Gastrocnemius medialis (tissue), 4 donors: ENCODE measurements at regions of chr9 and their contacts with region 1.

Region 1: DNA sequence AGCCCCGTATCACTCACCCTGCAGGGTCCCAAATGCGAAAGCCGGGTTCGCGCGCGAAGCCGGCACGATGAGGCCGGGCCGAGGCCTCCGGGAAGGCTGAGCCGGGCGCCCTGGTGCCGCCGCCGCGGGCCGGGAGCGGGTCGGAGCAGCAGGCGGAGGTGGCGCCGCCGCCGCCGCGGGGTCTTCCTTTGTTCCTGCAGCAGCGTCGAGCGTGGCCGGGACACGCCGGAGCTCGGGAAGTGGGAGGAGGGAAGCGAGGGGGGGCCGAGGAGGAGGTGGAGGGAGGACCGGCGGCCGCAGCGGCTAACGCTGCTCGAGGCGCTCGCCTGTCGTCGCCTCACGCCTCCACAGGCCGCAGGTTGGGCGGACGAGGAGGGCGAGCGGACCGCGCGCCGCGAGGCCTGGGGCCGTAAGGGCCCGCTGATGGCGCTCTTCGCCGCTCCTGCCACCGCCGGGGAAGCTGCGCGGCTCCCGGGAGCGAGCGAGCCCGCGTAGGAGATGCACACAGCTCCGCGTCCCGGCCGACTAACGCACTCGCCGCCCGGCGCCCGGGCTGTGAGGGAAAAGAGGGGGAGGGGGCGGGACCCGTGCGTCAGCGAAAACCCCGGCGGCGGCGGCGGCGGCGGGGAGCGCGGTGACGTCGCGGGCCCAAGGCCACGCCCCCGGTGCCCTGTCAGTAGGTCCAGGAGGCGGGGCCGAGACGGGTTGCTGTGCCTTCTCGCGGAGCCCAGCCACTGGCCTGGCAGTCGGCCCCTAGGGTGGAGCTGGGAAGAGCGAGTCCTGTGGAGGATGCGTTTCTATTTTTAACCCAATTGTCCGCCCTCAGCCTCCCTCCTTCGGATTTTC is at the start of gene ZFAND5:
- DNase-seq: peak; percentile 98 to 99
- ATAC-seq: peak; percentile 53 to 72
- H3K4me3 ChIP-seq: peak within 1 kb of the TSS; percentile 76 to 93 (median 85)
- H3K27ac ChIP-seq: peak within 1 kb of the TSS; percentile 94 to 99 (median 98)
- H3K4me1 ChIP-seq: peaks cover 16 to 17% of the 10 kb centered on the region in 2 donors
- H3K27me3 ChIP-seq: no peaks in the 10 kb centered on the region
- CTCF ChIP-seq: peak in 2 of 5 experiments; percentile 19 to 31
- POLR2A ChIP-seq: peak; percentile 100
- total RNA-seq, gene ZFAND5: 316 to 2,069 (median 561) TPM

Region 2: GRCh38 chr9:70413798-70414775 is 1950.8 kb before region 1 on chr9 and contains the start of gene KLF9:
- in situ Hi-C with region 1: no loop called
- intact Hi-C with region 1: loop called (anchors 2 kb)
- DNase-seq: peak; percentile 98 to 99
- ATAC-seq: peak; percentile 57 to 61
- H3K4me3 ChIP-seq: peak within 1 kb of the TSS; percentile 76 to 99 (median 96)
- H3K27ac ChIP-seq: peak within 1 kb of the TSS; percentile 92 to 100 (median 100)
- H3K4me1 ChIP-seq: peaks cover 46 to 52% of the 10 kb centered on the region in 2 donors
- H3K27me3 ChIP-seq: no peaks in the 10 kb centered on the region
- CTCF ChIP-seq: no peak
- POLR2A ChIP-seq: no peak
- total RNA-seq, gene KLF9: 122 to 174 (median 169) TPM

Region 3: GRCh38 chr9:72305102-72305546 is 59.8 kb before region 1 on chr9:
- in situ Hi-C with region 1: loop called in 1 of 4 experiments (anchors 10 kb)
- intact Hi-C with region 1: no loop called
- DNase-seq: peak; percentile 57 to 67
- ATAC-seq: peak; percentile 57 to 87
- H3K4me3 ChIP-seq: peak overlapping the region in 3 of 4 donors; percentile 14 to 49 (median 22)
- H3K27ac ChIP-seq: peak overlapping the region; percentile 23 to 86 (median 76)
- H3K4me1 ChIP-seq: peaks cover 0 to 14% of the 10 kb centered on the region in 2 donors
- H3K27me3 ChIP-seq: no peaks in the 10 kb centered on the region
- CTCF ChIP-seq: no peak
- POLR2A ChIP-seq: peak; percentile 42 to 83

Region 4: DNA sequence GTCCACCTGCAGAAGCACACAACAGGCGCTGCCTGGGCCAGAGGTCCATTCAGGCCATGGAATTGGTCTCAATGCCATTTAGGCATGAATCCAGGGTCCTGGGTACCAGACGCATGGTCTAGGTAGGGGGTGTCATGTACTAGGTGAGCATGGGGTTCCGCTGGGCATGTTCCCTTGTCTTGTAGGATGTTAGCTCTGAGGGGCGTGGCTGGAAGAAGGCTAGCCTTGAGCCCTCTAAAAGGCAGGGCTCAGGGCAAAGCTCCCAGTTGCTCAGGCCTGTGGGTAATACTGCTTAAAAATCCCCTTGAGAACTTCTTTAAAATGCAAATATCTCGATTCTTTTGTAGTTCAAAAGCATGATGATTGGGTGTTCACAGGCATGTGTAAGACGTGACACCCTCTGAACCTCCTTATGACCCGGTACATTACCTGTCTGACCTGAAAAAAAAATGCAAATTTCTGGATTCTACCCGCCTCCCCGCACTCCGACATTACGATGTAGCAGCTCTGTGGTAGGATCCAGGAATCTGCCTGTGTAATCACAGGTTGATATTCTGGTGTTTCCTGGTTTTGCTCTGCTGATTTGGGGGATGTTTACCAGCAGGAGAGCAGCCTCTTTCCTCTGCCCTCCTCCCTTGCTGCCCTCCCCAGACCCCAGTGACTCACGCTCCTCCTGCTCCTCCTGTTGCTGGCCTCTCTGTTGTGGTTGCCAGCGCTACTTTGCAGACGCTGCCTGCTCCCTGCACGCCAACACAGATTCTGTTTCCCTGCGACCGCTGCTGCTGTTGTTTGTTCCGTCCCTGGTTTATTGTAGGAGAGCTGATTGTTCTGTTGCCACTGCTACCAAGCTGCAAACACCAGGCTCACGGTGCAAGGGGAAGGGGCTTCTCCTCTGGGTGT is 162.2 kb after region 1 on chr9:
- in situ Hi-C with region 1: no loop called
- intact Hi-C with region 1: loop called (anchors 5 kb)
- DNase-seq: peak; percentile 80 to 82
- ATAC-seq: peak; percentile 95
- H3K4me3 ChIP-seq: peak overlapping the region; percentile 13 to 48 (median 34)
- H3K27ac ChIP-seq: peak overlapping the region; percentile 63 to 80 (median 74)
- H3K4me1 ChIP-seq: peaks cover 16 to 21% of the 10 kb centered on the region in 2 donors
- H3K27me3 ChIP-seq: no peaks in the 10 kb centered on the region
- CTCF ChIP-seq: no peak
- POLR2A ChIP-seq: peak; percentile 21 to 73

Region 5: DNA sequence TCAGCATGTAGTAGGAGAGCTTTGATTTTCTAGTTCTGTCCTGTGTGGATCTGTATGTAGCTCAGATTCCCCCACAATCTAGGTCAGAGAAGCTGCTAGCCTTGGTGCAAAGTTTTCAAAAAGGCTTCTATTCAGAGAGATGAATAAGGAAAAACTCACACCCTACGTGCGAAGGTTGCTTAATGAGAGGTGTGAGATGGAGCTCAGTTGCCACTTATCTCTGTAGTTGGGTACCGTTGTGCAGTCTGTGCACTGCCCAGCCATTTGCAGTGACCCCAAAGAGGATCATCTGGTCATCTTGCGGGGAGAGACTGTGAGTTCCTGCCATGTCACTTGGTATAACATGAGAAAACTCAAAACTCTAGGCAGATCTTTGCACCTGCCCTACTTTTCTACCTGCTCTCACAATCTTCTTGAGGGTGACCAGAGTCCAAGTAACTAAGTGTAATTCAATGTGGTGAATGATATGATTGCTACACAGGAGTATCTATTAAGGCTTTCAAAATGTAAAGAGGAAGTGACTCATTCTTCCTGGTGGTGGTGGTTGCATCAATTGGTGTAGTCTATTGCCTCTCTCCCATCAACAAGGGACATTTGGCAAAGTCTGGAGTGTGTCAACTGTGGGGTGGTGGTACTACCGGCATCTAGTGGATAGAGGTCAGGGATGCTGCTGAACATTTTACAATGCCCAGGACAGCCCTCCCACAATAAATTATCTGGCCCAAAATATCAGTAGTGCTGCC is 221.7 kb after region 1 on chr9:
- in situ Hi-C with region 1: loop called in 2 of 4 experiments (anchors 10 kb)
- intact Hi-C with region 1: no loop called
- DNase-seq: peak in 1 of 2 donors; percentile 39
- ATAC-seq: peak; percentile 64 to 87
- H3K4me3 ChIP-seq: no peak overlapping the region
- H3K27ac ChIP-seq: peak overlapping the region in 3 of 4 donors; percentile 36 to 69 (median 65)
- H3K4me1 ChIP-seq: peaks cover 5 to 12% of the 10 kb centered on the region in 2 donors
- H3K27me3 ChIP-seq: no peaks in the 10 kb centered on the region
- CTCF ChIP-seq: peak in 1 of 5 experiments; percentile 9
- POLR2A ChIP-seq: no peak